ENCODE measurements at regions of chr9 and their contacts with region 1.

Region 1: GRCh38 chr9:96859461-96860198 is 5.3 kb upstream of the ZNF782 start:
- DNase-seq: no peak
- ATAC-seq: no peak
- H3K4me3 ChIP-seq: no peak overlapping the region
- H3K27ac ChIP-seq: no peak overlapping the region
- H3K4me1 ChIP-seq: peaks cover 0 to 20% (median 7%) of the 10 kb centered on the region in 4 donors
- H3K27me3 ChIP-seq: no peaks in the 10 kb centered on the region
- CTCF ChIP-seq: no peak
- POLR2A ChIP-seq: no peak

Region 2: DNA sequence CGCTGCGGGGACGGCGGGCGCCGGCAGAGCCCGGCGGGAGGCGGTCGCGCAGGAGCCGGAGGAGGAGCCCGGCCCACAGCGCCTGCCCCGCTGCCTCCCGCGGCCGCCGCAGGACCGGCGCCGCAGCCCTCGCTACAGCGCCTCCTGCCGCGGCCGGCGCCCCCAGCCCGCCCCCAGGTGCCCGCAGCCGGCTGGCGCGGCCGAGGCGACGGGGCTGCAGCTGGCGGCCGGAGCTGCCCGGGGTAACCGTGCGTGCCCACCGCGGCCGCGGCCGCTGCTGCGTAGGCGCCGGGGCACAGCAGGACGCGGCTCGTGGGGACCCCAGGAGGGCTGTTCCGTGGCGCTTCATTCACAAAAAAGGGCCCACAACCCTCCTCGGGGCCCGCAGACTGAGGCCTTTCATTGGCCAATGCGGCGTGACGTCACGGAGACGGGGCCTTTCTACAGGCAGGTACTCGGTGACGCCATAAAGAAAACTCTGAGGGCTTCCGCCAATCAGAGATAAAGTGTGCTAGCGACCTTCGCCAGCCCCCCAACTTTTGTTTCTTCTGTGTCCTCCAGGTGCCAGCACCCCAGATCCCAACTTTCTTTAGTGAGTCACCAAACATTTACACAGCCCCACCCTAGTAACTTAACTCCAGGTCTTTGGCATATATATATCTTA is 240.0 kb before region 1 on chr9 and contains the start of gene CDC14B:
- intact Hi-C with region 1: no loop called
- DNase-seq: peak; percentile 87 to 93 (median 88)
- ATAC-seq: peak; percentile 74 to 86 (median 82)
- H3K4me3 ChIP-seq: peak within 1 kb of the TSS; percentile 57 to 76 (median 60)
- H3K27ac ChIP-seq: peak within 1 kb of the TSS; percentile 85 to 98 (median 94)
- H3K4me1 ChIP-seq: peaks cover 0 to 6% (median 0%) of the 10 kb centered on the region in 4 donors
- H3K27me3 ChIP-seq: no peaks in the 10 kb centered on the region
- CTCF ChIP-seq: peak in 2 of 4 donors; percentile 38 to 49
- POLR2A ChIP-seq: no peak
- total RNA-seq, gene CDC14B: 13.7 to 38.0 (median 25.7) TPM

Region 3: DNA sequence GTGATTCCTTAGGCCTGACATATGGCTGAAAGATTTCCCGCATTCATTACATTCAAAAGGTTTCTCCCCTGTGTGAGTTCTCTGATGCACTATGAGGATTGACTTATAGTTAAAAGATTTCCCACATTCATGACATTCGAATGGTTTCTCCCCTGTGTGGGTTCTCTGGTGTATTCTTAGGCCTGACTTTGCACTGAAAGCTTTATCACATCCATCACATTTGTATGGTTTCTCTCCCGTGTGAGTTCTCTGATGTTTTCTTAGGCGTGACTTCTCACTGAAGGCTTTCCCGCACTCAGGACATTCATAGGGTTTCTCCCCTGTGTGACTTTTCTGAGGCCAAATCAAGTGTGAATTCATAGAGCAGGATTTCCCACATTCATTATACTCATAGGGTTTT is 41.1 kb before region 1 on chr9:
- intact Hi-C with region 1: no loop called
- DNase-seq: no peak
- ATAC-seq: no peak
- H3K4me3 ChIP-seq: no peak overlapping the region
- H3K27ac ChIP-seq: no peak overlapping the region
- H3K4me1 ChIP-seq: no peaks in the 10 kb centered on the region
- H3K27me3 ChIP-seq: no peaks in the 10 kb centered on the region
- CTCF ChIP-seq: no peak
- POLR2A ChIP-seq: no peak

Region 4: GRCh38 chr9:97078344-97078743 is 218.7 kb after region 1 on chr9:
- intact Hi-C with region 1: no loop called
- DNase-seq: no peak
- ATAC-seq: no peak
- H3K4me3 ChIP-seq: no peak overlapping the region
- H3K27ac ChIP-seq: no peak overlapping the region
- H3K4me1 ChIP-seq: no peaks in the 10 kb centered on the region
- H3K27me3 ChIP-seq: peaks cover 0 to 5% of the 10 kb centered on the region in 2 donors
- CTCF ChIP-seq: no peak
- POLR2A ChIP-seq: no peak

Region 5: GRCh38 chr9:97128919-97129318 is 269.3 kb after region 1 on chr9:
- intact Hi-C with region 1: no loop called
- DNase-seq: no peak
- ATAC-seq: no peak
- H3K4me3 ChIP-seq: no peak overlapping the region
- H3K27ac ChIP-seq: no peak overlapping the region
- H3K4me1 ChIP-seq: no peaks in the 10 kb centered on the region
- H3K27me3 ChIP-seq: no peaks in the 10 kb centered on the region
- CTCF ChIP-seq: no peak
- POLR2A ChIP-seq: no peak

Region 6: DNA sequence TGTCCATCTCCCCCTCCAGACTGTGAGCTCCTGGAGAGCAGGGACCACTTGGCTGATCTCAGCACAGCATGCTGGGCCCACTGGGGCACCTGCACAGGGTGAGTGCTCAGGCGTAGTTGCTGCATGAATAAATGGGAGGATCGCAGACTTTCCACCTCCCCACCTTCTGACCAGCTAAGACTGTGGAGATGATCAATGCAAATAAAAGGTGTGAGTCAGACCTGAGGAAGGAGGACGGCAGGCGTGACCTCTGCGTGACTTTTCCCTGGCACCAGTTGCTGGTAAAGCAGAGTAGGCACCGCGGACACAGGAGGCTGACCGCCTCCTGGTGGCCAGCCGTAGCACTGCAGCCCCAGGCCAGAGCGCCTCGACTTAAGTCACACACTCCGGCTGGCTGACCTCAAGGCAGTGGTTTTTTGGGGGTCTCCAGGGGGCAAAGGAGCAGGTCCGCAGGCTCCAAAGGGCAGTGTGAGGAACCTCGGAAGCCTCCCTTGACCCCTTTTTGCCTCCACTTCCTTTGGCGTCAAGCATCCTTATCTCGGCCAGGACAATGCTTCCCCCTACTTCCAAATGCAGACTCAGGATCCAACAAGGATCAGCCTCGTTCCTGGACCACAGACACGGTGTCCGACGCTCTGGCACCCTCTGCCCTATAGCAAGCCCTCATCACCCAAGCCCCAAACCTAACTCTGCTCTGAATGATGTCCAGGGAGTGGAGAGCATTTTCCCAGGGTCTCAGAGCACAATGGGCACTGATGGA is 539.5 kb after region 1 on chr9:
- intact Hi-C with region 1: loop called in 1 of 2 experiments (anchors 10 kb)
- DNase-seq: peak; percentile 80 to 85 (median 83)
- ATAC-seq: peak; percentile 97 to 99 (median 98)
- H3K4me3 ChIP-seq: no peak overlapping the region
- H3K27ac ChIP-seq: no peak overlapping the region
- H3K4me1 ChIP-seq: peaks cover 0 to 3% (median 2%) of the 10 kb centered on the region in 4 donors
- H3K27me3 ChIP-seq: no peaks in the 10 kb centered on the region
- CTCF ChIP-seq: peak; percentile 95 to 99 (median 97)
- POLR2A ChIP-seq: no peak